Esophagus muscularis mucosa (tissue), 4 donors: ENCODE measurements at regions of chr7 and their contacts with region 1.

Region 1: GRCh38 chr7:18337048-18337809 is 158.3 kb upstream of the HDAC9 start:
- DNase-seq: no peak
- H3K4me3 ChIP-seq: no peak overlapping the region
- H3K27ac ChIP-seq: peak overlapping the region in 1 of 4 donors; percentile 39
- H3K4me1 ChIP-seq: peaks cover 8 to 19% (median 14%) of the 10 kb centered on the region in 4 donors
- H3K27me3 ChIP-seq: no peaks in the 10 kb centered on the region
- CTCF ChIP-seq: no peak
- EP300 ChIP-seq: no peak
- POLR2A ChIP-seq: no peak

Region 2: GRCh38 chr7:18212758-18213157 is 124.5 kb before region 1 on chr7:
- intact Hi-C with region 1: loop called (anchors 10 kb)
- DNase-seq: no peak
- H3K4me3 ChIP-seq: no peak overlapping the region
- H3K27ac ChIP-seq: peak overlapping the region; percentile 12 to 65 (median 53)
- H3K4me1 ChIP-seq: peaks cover 13 to 49% (median 40%) of the 10 kb centered on the region in 4 donors
- H3K27me3 ChIP-seq: no peaks in the 10 kb centered on the region
- CTCF ChIP-seq: no peak
- EP300 ChIP-seq: no peak
- POLR2A ChIP-seq: no peak

Region 3: GRCh38 chr7:18262058-18262457 is 75.2 kb before region 1 on chr7:
- intact Hi-C with region 1: no loop called
- DNase-seq: no peak
- H3K4me3 ChIP-seq: no peak overlapping the region
- H3K27ac ChIP-seq: no peak overlapping the region
- H3K4me1 ChIP-seq: peaks cover 0 to 7% (median 2%) of the 10 kb centered on the region in 4 donors
- H3K27me3 ChIP-seq: no peaks in the 10 kb centered on the region
- CTCF ChIP-seq: no peak
- EP300 ChIP-seq: no peak
- POLR2A ChIP-seq: no peak

Region 4: GRCh38 chr7:18305866-18306265 is 31.4 kb before region 1 on chr7:
- intact Hi-C with region 1: no loop called
- DNase-seq: no peak
- H3K4me3 ChIP-seq: no peak overlapping the region
- H3K27ac ChIP-seq: peak overlapping the region in 3 of 4 donors; percentile 16 to 37 (median 21)
- H3K4me1 ChIP-seq: peaks cover 4 to 85% (median 60%) of the 10 kb centered on the region in 4 donors
- H3K27me3 ChIP-seq: no peaks in the 10 kb centered on the region
- CTCF ChIP-seq: no peak
- EP300 ChIP-seq: no peak
- POLR2A ChIP-seq: no peak